ENCODE measurements at regions of chr17 and their contacts with region 1.

Region 1: DNA sequence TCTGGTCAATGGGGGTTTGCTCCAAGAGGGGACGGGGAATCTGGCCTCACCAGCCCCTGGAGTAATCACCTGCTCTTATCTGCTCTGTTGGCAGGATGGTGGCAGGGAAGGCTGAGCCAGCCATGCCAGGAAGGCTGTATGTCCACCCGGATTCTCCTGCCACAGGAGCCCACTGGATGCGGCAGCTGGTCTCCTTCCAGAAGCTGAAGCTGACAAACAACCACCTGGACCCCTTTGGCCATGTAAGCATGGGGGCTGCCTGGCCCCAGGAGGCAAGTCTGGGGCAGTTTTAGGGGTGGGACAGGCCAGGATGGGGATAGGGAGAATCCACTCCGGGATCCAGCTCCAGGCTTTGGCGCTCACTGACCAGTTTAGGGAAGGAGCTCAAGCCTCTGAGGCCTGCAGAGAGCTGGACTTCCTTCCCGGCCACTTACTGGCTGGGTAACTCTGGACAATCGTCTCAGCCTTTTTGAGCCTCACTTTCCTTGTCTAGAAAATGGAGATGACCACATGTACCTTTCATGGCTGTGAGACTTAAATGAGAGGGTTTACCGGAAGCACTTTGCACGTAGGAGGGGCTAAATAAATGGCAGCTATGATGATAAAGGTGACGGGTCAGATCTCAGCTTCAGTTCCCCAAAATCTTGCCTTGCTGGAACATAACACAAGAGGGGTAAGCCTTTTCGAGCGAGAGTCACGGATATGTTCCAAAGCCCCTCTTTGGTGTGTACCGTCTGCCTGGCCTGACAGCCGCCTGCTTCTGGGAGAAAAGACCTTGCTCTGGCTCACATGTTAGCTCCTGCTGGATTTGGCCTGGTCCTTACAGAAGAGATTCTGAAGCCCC is 15.4 kb downstream of the TBX4 start:
- DNase-seq: peak in 1 of 2 experiments; percentile 94
- H3K4me3 ChIP-seq: peak overlapping the region in 1 of 4 experiments; percentile 33; a peak in 2 of 8 replicates
- H3K27ac ChIP-seq: no peak overlapping the region
- H3K4me1 ChIP-seq: peaks cover 4 to 25% (median 11%) of the 10 kb centered on the region in 4 experiments
- H3K27me3 ChIP-seq: peaks cover 17 to 59% (median 50%) of the 10 kb centered on the region in 4 experiments
- CTCF ChIP-seq: no peak
- EP300 ChIP-seq: no peak
- POLR2A ChIP-seq: no peak
- RAD21 ChIP-seq: no peak

Region 2: DNA sequence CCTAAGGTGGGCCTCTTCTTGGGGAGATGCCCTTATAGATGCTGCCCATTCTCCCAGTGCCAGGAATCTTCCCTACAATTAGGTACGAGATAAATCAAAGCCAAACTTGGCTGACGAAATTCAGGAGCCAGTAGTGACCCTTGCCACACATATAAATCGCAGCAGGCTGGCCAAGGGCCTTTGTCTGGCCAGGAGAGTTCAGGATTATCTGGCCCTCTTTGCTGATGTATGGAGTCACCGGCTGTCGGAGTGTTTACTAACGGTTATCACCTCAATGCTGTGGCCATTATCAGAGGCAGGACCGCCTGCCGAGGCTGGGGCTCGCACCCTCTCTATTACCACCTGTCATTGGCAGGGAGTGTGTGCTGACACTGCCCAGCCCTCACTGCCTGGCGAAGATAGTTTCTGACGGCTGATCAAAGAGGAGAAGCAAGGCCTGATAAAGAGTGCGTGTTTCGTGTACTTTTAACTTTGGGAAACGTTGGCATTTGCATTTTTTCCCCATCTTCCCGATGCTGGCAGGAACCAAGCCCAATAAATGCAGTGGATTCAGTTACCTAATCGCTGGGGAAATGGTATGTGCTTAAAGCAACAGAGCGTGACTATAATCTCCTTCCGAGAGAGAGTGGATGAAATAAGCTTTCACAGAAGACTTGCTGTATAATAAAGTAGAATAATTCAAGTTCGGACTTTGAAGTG is 100.8 kb before region 1 on chr17:
- CTCF ChIA-PET with region 1: no interaction called
- POLR2A ChIA-PET with region 1: no interaction called
- DNase-seq: no peak
- H3K4me3 ChIP-seq: no peak overlapping the region
- H3K27ac ChIP-seq: no peak overlapping the region
- H3K4me1 ChIP-seq: peaks cover 0 to 3% (median 0%) of the 10 kb centered on the region in 4 experiments; a peak in 1 of 7 replicates
- H3K27me3 ChIP-seq: no peaks in the 10 kb centered on the region; a peak in 1 of 7 replicates
- CTCF ChIP-seq: no peak
- EP300 ChIP-seq: no peak
- POLR2A ChIP-seq: no peak
- RAD21 ChIP-seq: no peak

Region 3: DNA sequence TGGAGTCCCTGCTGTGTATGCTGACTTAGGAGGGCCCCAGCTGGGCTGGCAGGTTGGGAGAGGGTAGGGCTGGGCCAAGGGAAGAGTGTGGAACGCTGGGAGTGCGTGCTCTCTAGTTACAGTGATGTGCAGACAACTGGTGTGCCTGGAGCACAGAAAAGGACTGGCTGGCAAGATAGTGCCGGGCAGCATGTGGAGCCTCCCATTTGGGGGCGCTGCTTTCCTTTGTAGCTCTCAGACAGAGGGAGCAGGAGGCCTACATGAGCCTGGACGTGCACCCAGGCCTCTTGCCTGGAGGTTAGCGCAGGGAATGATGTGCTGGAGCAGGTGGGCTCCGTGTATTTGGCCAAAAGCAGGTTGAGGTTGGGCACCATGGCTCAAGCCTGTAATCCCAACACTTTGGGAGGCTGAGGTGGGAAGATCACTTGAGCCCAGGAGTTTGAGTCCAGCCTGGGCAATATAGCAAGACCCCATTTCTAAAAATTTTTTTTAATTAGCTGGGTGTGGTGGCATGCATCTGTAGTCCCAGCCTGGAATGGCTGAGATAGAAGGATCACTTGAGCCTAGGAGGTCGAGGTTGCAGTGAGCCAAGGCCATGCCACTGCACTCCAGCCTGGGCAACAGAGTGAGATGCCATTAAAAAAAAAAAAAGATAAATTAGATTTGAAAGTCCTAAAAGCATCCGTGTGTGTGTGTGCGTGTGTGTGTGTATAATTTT is 41.5 kb before region 1 on chr17:
- CTCF ChIA-PET with region 1: interaction called, 27 read pairs
- POLR2A ChIA-PET with region 1: no interaction called
- DNase-seq: peak in 1 of 2 experiments; percentile 67
- H3K4me3 ChIP-seq: no peak overlapping the region
- H3K27ac ChIP-seq: no peak overlapping the region
- H3K4me1 ChIP-seq: peaks cover 0 to 4% (median 2%) of the 10 kb centered on the region in 4 experiments; a peak in 3 of 7 replicates
- H3K27me3 ChIP-seq: no peaks in the 10 kb centered on the region; a peak in 1 of 7 replicates
- CTCF ChIP-seq: peak; percentile 49 to 73 (median 69)
- EP300 ChIP-seq: no peak
- POLR2A ChIP-seq: no peak
- RAD21 ChIP-seq: peak; percentile 68 to 81

Region 4: DNA sequence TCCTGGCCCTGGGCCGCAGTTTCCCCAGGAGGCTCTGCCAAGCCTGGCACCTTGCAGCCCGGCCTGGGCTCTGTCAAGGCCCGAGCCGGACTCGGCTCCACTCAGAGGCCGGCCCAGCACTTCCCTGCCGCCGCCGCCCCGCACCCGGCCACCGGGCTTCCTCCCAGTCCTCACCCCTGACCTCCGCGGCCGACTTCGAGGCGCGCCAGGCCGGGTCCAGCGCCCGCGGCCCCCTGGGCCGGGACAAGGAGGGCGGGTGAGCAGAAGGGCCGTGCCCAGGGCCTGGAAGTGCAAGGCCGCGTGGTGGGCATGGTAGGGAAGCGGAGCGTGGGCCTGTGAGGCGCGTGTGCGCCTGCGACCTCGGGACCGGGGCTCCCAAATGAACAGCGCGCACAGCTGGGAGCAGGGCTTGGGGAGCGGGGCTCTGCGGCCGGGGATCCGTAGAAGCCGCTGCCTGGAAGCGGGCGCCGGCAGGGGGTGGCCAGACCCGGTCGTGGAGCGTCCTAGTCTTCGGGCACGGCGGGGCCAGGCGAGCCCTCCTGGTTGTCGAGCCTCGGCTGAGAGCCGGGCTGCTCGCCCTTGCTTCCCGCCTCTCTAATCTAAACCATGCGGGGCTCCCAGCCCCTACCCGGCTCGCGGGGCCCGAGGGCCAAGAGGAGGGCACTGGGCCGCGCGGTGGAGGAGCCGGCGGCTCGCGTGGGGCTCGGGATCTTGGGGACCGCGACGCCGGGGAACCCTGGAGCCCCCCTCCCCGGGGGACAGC is 15.9 kb before region 1 on chr17:
- CTCF ChIA-PET with region 1: interaction called, 136 read pairs
- POLR2A ChIA-PET with region 1: interaction called, 6 read pairs
- DNase-seq: peak in 1 of 2 experiments; percentile 83
- H3K4me3 ChIP-seq: peak overlapping the region; percentile 16 to 59 (median 18); a peak in 6 of 8 replicates
- H3K27ac ChIP-seq: no peak overlapping the region
- H3K4me1 ChIP-seq: peaks cover 0 to 26% (median 10%) of the 10 kb centered on the region in 4 experiments; a peak in 5 of 7 replicates
- H3K27me3 ChIP-seq: peaks cover 63 to 90% (median 71%) of the 10 kb centered on the region in 4 experiments
- CTCF ChIP-seq: no peak
- EP300 ChIP-seq: no peak
- POLR2A ChIP-seq: no peak
- RAD21 ChIP-seq: no peak

Region 5: DNA sequence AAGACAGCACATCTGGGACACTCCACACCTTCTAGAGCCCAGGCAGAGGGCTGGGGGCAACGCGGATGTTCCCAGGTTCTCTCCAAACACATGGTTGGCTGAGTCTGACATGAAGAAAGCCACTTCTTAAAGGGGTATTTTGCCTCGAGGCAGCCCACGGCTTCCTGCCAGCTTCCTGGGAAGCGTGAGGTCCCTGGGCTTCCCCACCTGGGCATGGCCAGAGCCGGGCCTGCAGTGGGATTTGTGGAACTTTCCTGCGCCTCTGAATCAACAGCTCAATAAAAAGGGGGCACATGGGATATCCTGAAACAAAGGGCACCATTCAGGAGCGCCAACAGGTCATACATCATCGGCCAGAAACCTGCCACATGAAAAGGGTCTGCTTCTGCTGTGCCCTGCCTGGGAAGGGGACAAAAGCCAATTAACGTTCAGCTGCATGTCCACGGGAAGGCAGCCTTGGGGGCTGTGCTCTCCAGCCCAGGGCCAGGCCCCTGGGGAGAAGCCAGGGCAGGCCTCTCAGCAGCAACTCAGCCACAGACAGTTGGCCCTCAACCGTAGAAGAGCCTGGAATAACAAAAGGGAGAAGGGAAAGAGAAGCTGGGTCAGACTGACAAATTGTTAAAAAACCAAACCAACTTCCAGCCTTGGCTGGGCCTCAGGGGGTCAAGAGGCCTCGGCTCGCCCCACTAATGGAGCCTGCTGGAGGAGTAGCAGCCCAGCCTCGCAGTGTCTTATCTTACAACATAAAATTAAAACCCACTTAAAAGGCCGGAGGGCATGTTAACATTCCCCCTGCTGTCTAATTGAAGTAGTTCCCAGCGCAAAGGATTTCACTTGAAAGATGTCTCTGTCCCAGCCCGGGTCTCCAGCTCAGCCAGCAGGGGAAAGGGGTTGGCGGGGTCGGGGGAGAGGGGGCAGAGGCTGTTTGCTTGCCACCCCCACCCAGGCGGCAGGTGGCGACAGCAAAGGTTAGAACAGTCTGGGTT is 18.8 kb after region 1 on chr17:
- CTCF ChIA-PET with region 1: interaction called, 171 read pairs
- POLR2A ChIA-PET with region 1: no interaction called
- DNase-seq: no peak
- H3K4me3 ChIP-seq: no peak overlapping the region
- H3K27ac ChIP-seq: no peak overlapping the region
- H3K4me1 ChIP-seq: peaks cover 3 to 5% (median 4%) of the 10 kb centered on the region in 4 experiments; a peak in 5 of 7 replicates
- H3K27me3 ChIP-seq: no peaks in the 10 kb centered on the region
- CTCF ChIP-seq: 0 out of 4 replicates have a peak, but pooled peaks of 1 of the 3 experiments have one; percentile 2
- EP300 ChIP-seq: no peak
- POLR2A ChIP-seq: no peak
- RAD21 ChIP-seq: no peak

Region 6: DNA sequence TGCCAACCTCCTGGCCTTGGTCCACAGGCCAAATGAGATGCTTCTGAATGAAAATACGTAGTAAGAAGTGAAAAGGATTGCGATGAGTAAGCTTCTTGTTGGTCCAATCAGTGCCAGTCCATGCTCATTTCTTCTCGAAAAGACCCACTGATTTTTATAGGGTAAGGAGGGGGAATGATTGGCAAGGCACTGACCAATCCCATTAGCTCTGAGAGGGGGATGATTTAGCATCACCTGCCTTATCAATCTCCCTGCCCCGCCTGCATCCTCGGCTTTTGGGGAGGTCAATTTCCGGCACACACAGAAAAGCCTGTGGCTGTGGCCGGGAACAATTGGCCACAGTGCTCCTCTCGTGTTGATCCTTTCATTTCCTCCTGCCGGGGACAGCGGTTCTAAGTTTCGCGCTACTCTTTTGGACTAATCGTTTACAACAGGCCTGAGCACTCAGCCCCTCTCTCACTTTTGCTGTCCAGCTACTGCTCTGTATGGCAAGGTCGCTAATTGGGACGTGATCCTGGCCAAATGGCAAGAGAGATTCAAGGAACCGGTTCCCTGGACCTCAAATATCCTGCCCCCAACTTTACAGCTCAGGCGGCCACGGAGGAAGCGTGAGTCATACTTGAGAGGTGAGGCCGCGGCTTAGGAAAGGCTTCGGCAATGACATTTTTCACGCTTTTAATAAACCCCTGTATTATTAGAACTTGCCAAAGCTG is 27.7 kb after region 1 on chr17:
- CTCF ChIA-PET with region 1: interaction called, 10 read pairs
- POLR2A ChIA-PET with region 1: no interaction called
- DNase-seq: no peak
- H3K4me3 ChIP-seq: no peak overlapping the region
- H3K27ac ChIP-seq: no peak overlapping the region
- H3K4me1 ChIP-seq: peaks cover 0 to 3% (median 2%) of the 10 kb centered on the region in 4 experiments; a peak in 3 of 7 replicates
- H3K27me3 ChIP-seq: no peaks in the 10 kb centered on the region
- CTCF ChIP-seq: no peak
- EP300 ChIP-seq: no peak
- POLR2A ChIP-seq: no peak
- RAD21 ChIP-seq: no peak

Region 7: DNA sequence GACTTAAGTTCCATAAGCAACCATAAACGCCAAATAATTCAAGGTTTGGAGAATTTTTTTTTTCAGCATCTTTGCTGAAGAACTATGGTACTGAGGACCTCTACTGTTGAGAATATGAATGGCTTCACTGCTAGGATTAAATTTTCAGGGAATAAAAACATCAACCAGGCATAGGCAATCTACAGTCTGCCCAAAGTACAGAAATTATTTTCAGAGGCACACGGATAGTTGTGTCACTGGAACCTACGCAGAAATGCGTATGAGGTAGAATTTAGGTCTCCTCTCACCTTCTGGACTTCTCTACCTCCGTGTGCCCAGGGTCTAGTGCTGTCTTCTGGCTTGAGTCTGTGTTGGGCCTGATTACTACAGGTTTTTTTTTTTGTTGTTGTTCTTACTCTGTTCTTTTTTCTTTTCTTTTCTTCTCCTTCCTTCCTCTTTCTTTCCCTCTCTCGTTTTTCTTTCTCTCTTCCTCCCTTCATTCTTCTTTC is 83.7 kb after region 1 on chr17:
- CTCF ChIA-PET with region 1: interaction called, 15 read pairs
- POLR2A ChIA-PET with region 1: no interaction called
- DNase-seq: no peak
- H3K4me3 ChIP-seq: no peak overlapping the region
- H3K27ac ChIP-seq: no peak overlapping the region
- H3K4me1 ChIP-seq: no peaks in the 10 kb centered on the region
- H3K27me3 ChIP-seq: no peaks in the 10 kb centered on the region; a peak in 2 of 7 replicates
- CTCF ChIP-seq: peak in 2 of 3 experiments; percentile 40 to 62; a peak in 2 of 4 replicates
- EP300 ChIP-seq: no peak
- POLR2A ChIP-seq: no peak
- RAD21 ChIP-seq: peak; percentile 73 to 75

Measured in H1 (cell line).